HCT116 (cell line): ENCODE measurements at regions of chr4 and their contacts with region 1.

Region 1: DNA sequence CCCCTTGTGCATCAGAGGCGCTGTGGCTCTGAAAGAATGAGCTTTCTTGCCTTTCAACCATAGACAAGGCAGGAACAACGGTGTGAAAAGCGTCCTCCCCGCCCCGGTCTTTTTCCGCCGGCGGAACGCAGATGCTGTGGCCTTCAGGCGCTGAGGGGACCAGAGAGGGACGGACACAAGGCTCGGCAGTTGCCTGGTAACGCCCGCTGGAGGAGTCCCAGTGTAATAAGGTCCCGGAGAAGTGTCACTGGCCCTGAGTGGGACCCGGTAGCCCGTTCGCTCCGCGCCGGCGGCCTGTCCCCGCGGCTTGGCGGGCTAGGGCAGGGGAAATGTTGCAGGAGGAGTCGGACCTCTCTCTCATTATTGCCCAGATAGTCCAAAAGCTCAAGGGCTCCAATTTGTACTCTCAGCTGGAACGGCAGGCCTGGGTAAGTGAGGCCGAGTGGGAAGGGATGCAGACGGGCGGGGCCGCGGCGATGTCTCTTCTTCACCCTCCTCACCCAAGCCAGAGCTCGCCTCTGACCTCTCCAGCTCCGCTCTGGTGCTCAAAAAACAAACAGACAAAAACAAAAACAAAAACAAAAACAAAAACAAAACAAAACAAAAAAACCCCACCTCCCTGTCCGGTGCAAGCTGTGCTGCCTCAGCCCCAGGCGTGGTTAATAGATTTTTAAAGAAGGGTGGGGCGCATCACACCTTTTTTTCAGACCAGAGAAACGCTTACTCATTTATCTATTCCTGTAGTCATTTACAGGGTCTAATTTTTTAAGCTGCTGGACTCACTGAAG is at the start of gene TBC1D19:
- DNase-seq: peak; percentile 80
- ATAC-seq: peak; percentile 97
- H3K4me3 ChIP-seq: peak within 1 kb of the TSS; percentile 71 to 77
- H3K27ac ChIP-seq: peak within 1 kb of the TSS; percentile 77
- H3K4me1 ChIP-seq: peaks cover 11 to 42% of the 10 kb centered on the region in 2 experiments
- H3K27me3 ChIP-seq: no peaks in the 10 kb centered on the region
- CTCF ChIP-seq: no peak
- POLR2A ChIP-seq: peak; percentile 45
- RAD21 ChIP-seq: no peak
- total RNA-seq, gene TBC1D19: 25.4 TPM

Region 2: DNA sequence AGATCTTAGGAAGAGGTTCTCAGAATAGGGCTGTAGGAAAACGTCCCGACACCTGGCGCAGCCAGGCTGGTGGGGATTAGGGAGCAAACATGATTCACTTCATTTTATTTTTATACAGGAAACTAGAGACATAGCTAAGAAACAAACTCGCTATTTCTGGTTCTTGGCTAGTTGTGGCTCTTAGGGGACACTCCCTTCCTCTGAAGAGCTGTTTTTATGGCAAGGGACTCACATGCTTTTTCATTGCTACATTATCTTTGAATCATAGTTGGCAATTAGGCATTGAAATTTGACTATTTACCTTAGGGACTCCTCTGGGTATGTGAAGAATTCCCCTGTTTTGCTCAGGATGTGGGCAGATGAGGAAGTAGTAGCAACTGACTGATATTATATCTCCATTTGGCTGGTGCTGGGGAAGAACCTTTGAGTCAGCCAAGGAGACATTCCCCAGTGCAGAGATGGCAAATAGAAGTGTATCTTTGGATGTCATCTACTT is 495.6 kb before region 1 on chr4:
- CTCF ChIA-PET with region 1: no interaction called
- POLR2A ChIA-PET with region 1: no interaction called
- RAD21 ChIA-PET with region 1: no interaction called
- intact Hi-C with region 1: no loop called
- DNase-seq: no peak
- ATAC-seq: no peak
- H3K4me3 ChIP-seq: no peak overlapping the region
- H3K27ac ChIP-seq: no peak overlapping the region
- H3K4me1 ChIP-seq: peaks cover 0 to 13% of the 10 kb centered on the region in 2 experiments; a peak in 2 of 4 replicates
- H3K27me3 ChIP-seq: no peaks in the 10 kb centered on the region
- CTCF ChIP-seq: no peak
- POLR2A ChIP-seq: no peak
- RAD21 ChIP-seq: no peak

Region 3: GRCh38 chr4:26342328-26343037 is 241.6 kb before region 1 on chr4:
- CTCF ChIA-PET with region 1: no interaction called
- POLR2A ChIA-PET with region 1: no interaction called
- RAD21 ChIA-PET with region 1: no interaction called
- intact Hi-C with region 1: no loop called
- DNase-seq: peak; percentile 23
- ATAC-seq: peak; percentile 88
- H3K4me3 ChIP-seq: no peak overlapping the region
- H3K27ac ChIP-seq: no peak overlapping the region
- H3K4me1 ChIP-seq: peaks cover 8 to 31% of the 10 kb centered on the region in 2 experiments
- H3K27me3 ChIP-seq: no peaks in the 10 kb centered on the region
- CTCF ChIP-seq: no peak
- POLR2A ChIP-seq: no peak
- RAD21 ChIP-seq: no peak

Region 4: DNA sequence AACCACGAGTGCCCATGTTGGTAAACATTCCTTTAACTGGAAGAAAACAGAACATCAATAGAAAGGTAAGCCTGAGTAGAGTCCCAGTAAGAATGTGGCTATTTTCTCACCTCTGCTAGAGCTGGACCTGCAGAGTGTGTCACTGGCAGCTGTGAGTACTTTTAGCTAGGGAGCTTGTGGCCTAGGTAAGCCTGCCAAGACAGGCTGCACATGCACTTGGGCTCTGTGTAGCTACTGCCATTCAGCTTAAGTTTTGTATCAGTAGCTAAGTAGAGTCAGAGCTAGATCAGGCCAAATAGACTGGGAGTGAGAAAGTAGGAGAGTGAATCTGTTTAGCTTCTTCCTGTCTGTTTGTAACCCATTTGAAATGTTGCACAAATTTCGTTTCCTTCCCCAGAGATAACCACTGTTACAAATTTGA is 228.0 kb before region 1 on chr4:
- CTCF ChIA-PET with region 1: no interaction called
- POLR2A ChIA-PET with region 1: no interaction called
- RAD21 ChIA-PET with region 1: no interaction called
- intact Hi-C with region 1: no loop called
- DNase-seq: no peak
- ATAC-seq: peak; percentile 40
- H3K4me3 ChIP-seq: no peak overlapping the region
- H3K27ac ChIP-seq: no peak overlapping the region
- H3K4me1 ChIP-seq: peaks cover 3 to 7% of the 10 kb centered on the region in 2 experiments; a peak in 3 of 4 replicates
- H3K27me3 ChIP-seq: no peaks in the 10 kb centered on the region
- CTCF ChIP-seq: no peak
- POLR2A ChIP-seq: no peak
- RAD21 ChIP-seq: no peak

Region 5: GRCh38 chr4:26459054-26459755 is 124.9 kb before region 1 on chr4:
- CTCF ChIA-PET with region 1: no interaction called
- POLR2A ChIA-PET with region 1: no interaction called
- RAD21 ChIA-PET with region 1: no interaction called
- intact Hi-C with region 1: loop called (anchors 5 kb)
- DNase-seq: peak; percentile 61
- ATAC-seq: peak; percentile 85
- H3K4me3 ChIP-seq: peak overlapping the region; percentile 32 to 46
- H3K27ac ChIP-seq: no peak overlapping the region
- H3K4me1 ChIP-seq: peaks cover 0 to 15% of the 10 kb centered on the region in 2 experiments; a peak in 2 of 4 replicates
- H3K27me3 ChIP-seq: no peaks in the 10 kb centered on the region
- CTCF ChIP-seq: peak; percentile 62 to 72 (median 63); a peak in 5 of 6 replicates
- POLR2A ChIP-seq: no peak
- RAD21 ChIP-seq: peak; percentile 84

Region 6: GRCh38 chr4:26568446-26568994 is 15.5 kb before region 1 on chr4:
- CTCF ChIA-PET with region 1: interaction called, 4 read pairs
- POLR2A ChIA-PET with region 1: interaction called, 39 read pairs
- RAD21 ChIA-PET with region 1: interaction called in 1 of 2 experiments, 3 read pairs
- intact Hi-C with region 1: loop called (anchors 1 kb)
- DNase-seq: peak; percentile 93
- ATAC-seq: peak; percentile 76
- H3K4me3 ChIP-seq: peak overlapping the region in 1 of 2 experiments; percentile 26; a peak in 1 of 4 replicates
- H3K27ac ChIP-seq: peak overlapping the region; percentile 88
- H3K4me1 ChIP-seq: peaks cover 46 to 61% of the 10 kb centered on the region in 2 experiments
- H3K27me3 ChIP-seq: no peaks in the 10 kb centered on the region
- CTCF ChIP-seq: no peak
- POLR2A ChIP-seq: no peak
- RAD21 ChIP-seq: no peak

Region 7: DNA sequence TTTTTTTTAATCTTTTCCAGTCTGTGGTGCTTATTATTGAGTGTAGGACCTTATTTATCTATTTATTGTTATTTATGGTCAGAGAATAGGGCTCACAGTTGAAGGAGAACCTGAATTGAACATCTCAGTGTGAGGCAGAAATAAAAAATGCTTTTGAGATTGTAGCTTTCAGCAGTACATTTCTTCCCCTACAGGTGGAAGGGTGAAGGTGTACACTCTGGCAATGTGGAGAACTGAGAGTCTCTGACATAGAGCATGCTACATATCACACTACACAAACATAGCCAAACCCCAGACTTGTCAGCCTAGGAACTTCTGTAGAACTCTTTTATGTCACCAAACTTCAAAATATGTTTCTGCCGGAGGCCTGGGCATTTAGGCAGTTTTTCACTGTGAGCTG is 416.8 kb after region 1 on chr4:
- CTCF ChIA-PET with region 1: no interaction called
- POLR2A ChIA-PET with region 1: no interaction called
- RAD21 ChIA-PET with region 1: no interaction called
- intact Hi-C with region 1: loop called (anchors 10 kb)
- DNase-seq: no peak
- ATAC-seq: peak; percentile 94
- H3K4me3 ChIP-seq: no peak overlapping the region
- H3K27ac ChIP-seq: no peak overlapping the region
- H3K4me1 ChIP-seq: peaks cover 0 to 6% of the 10 kb centered on the region in 2 experiments; a peak in 1 of 4 replicates
- H3K27me3 ChIP-seq: no peaks in the 10 kb centered on the region
- CTCF ChIP-seq: peak in 2 of 3 experiments; percentile 44 to 50; a peak in 4 of 6 replicates
- POLR2A ChIP-seq: no peak
- RAD21 ChIP-seq: peak; percentile 47